ENCODE measurements at regions of chr4 and their contacts with region 1.

Region 1: DNA sequence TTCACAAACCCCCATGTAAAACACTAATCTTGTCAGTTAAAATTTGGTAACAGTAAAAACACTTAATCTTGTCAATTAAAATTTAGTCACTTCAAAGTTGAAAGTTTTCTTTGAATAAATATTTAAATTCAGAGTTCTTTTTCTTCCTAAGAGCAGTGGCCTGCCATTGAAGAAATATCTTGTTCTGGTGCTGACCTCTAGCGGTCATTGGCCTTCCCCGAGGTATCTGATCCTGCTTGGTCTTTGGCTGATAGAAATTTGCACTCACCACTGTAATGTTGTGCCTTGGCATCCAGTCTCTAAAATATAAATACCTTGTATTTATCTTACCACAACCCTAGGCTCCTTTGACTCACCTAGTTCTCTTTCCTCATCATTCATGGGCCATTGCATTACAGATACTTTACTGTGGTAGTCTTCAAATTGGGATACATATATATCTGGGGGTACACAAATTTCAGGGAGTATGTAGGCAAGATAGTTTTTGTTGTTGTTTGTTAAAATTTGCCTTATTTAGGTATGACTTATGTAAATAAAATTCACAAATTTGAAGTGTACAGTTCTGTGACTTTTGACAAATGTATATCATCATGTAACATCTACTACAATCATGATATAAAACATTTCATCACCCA is 6.7 kb upstream of the ART3 start:
- DNase-seq: peak; percentile 92
- H3K4me3 Mint-ChIP-seq: no peak overlapping the region
- H3K27ac Mint-ChIP-seq: no peak overlapping the region
- H3K4me1 Mint-ChIP-seq: no peaks in the 10 kb centered on the region
- H3K27me3 Mint-ChIP-seq: no peaks in the 10 kb centered on the region

Region 2: GRCh38 chr4:75895744-75896314 is 171.9 kb before region 1 on chr4:
- intact Hi-C with region 1: loop called (anchors 5 kb)
- DNase-seq: peak; percentile 70
- H3K4me3 Mint-ChIP-seq: no peak overlapping the region
- H3K27ac Mint-ChIP-seq: no peak overlapping the region
- H3K4me1 Mint-ChIP-seq: no peaks in the 10 kb centered on the region
- H3K27me3 Mint-ChIP-seq: peaks cover 16% of the 10 kb centered on the region

Region 3: DNA sequence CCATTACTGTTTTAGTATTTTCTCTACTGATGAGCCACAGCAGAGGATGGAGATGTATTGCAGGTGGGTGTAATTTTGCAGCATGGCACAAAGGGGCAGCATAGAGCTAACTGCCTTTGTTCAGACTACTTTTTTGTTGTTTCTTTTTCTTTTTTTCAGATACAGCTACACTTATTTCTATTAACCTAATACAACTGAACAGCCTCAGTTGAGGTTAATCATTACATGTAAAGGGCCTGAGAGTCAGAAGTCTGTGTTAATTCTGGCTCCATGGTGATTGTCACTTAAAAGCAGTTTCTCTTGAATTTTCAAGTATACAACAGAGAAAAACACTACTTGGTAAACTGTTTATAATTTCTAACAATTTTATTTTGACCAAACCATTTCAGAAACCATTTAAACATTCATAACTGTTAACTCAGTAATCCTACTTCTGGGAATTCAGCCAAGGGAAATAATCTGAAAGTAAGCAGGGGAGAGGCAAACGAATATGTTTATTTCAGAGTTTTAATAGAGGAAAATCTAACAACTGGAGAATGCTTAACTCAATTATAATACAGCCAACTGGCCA is 151.6 kb before region 1 on chr4:
- intact Hi-C with region 1: loop called (anchors 2 kb)
- DNase-seq: peak; percentile 79
- H3K4me3 Mint-ChIP-seq: no peak overlapping the region
- H3K27ac Mint-ChIP-seq: no peak overlapping the region
- H3K4me1 Mint-ChIP-seq: no peaks in the 10 kb centered on the region
- H3K27me3 Mint-ChIP-seq: no peaks in the 10 kb centered on the region

Region 4: DNA sequence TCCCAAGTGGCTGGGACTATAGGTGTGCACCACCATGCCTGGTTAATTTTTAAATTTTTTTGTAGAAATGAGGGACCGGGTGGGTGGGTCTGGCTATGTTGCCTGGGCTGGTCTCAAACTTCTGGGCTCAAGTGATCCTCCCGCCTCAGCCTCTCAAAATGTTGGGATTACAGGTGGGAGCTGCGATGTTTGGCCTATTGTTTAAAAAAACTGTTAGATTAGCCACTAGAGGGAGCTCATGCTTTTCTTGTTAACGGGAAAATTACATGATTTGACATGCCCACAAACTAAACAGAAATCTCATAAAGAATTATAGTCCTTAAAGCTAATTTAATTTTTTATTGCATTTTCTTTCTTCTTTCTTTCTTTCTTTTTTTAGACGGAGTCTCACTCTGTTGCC is 72.0 kb before region 1 on chr4:
- intact Hi-C with region 1: loop called (anchors 1 kb)
- DNase-seq: peak; percentile 71
- H3K4me3 Mint-ChIP-seq: no peak overlapping the region
- H3K27ac Mint-ChIP-seq: no peak overlapping the region
- H3K4me1 Mint-ChIP-seq: peaks cover 5% of the 10 kb centered on the region
- H3K27me3 Mint-ChIP-seq: peaks cover 10% of the 10 kb centered on the region

Region 5: DNA sequence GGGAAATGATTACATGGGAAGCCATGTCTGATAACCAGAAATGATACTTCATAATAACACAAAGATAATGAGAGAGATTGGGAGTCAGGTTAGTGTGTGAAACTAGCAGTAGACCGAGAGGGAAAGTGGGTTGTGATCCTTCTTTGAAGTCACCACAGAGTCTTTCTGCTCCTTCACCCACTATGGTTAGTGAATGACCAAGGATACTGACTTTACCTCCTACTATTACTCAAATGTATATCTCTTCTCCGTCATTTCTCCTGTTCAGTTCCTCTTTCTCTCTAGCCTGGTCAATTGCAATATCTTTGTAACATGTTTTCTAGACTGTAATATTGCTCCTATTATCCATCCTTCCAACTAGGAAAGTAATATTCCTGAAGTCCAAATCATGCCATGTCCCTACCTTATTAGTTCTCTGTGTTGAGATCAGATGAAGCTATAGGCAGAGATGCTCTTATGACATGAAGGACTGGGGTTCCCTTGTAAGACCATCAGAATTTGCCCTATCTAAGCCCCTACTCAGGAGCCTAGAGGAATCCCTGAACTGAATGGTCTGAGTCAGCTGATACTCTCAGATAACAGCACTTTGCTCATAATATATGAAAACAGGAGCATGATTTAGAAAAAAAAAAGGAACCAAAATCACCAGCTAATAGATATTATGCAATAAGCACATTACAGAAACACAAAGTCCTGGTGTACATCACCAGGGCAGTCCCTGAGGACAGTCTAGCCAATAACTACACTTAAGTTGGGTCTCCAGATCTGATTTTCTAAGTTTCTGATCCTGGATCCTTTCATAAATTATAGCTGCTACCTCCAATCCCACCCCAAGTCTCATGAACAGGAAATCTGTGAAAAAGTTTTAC is 448.4 kb after region 1 on chr4:
- intact Hi-C with region 1: no loop called
- DNase-seq: no peak
- H3K4me3 Mint-ChIP-seq: no peak overlapping the region
- H3K27ac Mint-ChIP-seq: no peak overlapping the region
- H3K4me1 Mint-ChIP-seq: no peaks in the 10 kb centered on the region
- H3K27me3 Mint-ChIP-seq: peaks cover 2% of the 10 kb centered on the region

Measured in activated CD4-positive, alpha-beta T cell treated with anti-CD3 and anti-CD28 coated beads, Interleukin-2, amount 10 ng/mL, durations not matched to agents 24 days and 14 days (primary cell).